ENCODE measurements at regions of chr7 and their contacts with region 1.

Region 1: DNA sequence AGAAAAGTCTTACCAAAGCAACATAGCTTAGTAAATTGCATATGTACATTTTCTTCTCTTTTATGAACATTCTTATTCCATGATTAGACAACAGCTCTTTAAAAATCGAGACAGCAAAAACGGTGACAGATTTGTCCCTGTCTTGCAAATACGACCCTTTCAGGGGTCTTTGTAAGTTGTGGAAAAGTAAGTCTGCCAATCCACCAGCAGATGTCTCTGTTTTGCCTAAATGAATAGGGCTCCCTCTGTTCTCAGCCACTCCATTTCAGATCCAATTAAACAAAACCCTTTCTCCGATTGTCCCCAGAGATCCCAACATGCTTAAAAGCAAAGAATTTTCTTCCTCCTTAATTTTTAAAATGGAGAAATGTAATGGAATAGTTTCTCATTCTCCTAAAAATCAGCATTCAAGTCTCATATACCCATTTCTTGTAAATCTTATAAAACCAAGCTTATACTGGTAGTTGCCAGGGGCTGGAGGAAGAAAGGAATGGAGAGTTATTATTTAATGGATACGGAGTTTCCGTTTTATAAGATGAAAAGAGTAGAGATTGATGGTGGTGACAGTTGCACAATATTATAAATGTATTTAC is 61.0 kb upstream of the NFE2L3 start:
- DNase-seq: peak; percentile 59
- ATAC-seq: peak; percentile 84
- H3K4me3 ChIP-seq: 0 out of 4 replicates have a peak overlapping the region, but pooled peaks of 1 of the 2 experiments have one; percentile 14
- H3K27ac ChIP-seq: no peak overlapping the region
- H3K4me1 ChIP-seq: peaks cover 0 to 3% of the 10 kb centered on the region in 2 experiments; a peak in 1 of 4 replicates
- H3K27me3 ChIP-seq: no peaks in the 10 kb centered on the region
- CTCF ChIP-seq: peak; percentile 63 to 82 (median 81)
- POLR2A ChIP-seq: no peak
- RAD21 ChIP-seq: peak; percentile 79

Region 2: GRCh38 chr7:26151953-26152781 is 61.1 kb after region 1 on chr7 and contains the start of gene NFE2L3:
- CTCF ChIA-PET with region 1: interaction called, 6 read pairs
- POLR2A ChIA-PET with region 1: no interaction called
- RAD21 ChIA-PET with region 1: interaction called in 1 of 2 experiments, 3 read pairs
- intact Hi-C with region 1: loop called (anchors 5 kb)
- DNase-seq: peak; percentile 64
- ATAC-seq: peak; percentile 86
- H3K4me3 ChIP-seq: peak within 1 kb of the TSS; percentile 49 to 62
- H3K27ac ChIP-seq: peak within 1 kb of the TSS; percentile 57; the same call in 1 of the 2 replicates
- H3K4me1 ChIP-seq: peaks cover 28 to 51% of the 10 kb centered on the region in 2 experiments
- H3K27me3 ChIP-seq: no peaks in the 10 kb centered on the region
- CTCF ChIP-seq: no peak
- POLR2A ChIP-seq: peak; percentile 31
- RAD21 ChIP-seq: no peak
- total RNA-seq, gene NFE2L3: 27.0 TPM

Region 3: GRCh38 chr7:26187380-26188205 is 96.6 kb after region 1 on chr7:
- CTCF ChIA-PET with region 1: interaction called, 16 read pairs
- POLR2A ChIA-PET with region 1: interaction called, 4 read pairs
- RAD21 ChIA-PET with region 1: no interaction called
- intact Hi-C with region 1: loop called (anchors 2 kb)
- DNase-seq: no peak
- ATAC-seq: peak; percentile 43
- H3K4me3 ChIP-seq: no peak overlapping the region
- H3K27ac ChIP-seq: no peak overlapping the region; the same call in none of the 2 replicates
- H3K4me1 ChIP-seq: no peaks in the 10 kb centered on the region
- H3K27me3 ChIP-seq: no peaks in the 10 kb centered on the region
- CTCF ChIP-seq: no peak
- POLR2A ChIP-seq: no peak
- RAD21 ChIP-seq: no peak

Region 4: GRCh38 chr7:26193432-26194207 is 102.6 kb after region 1 on chr7:
- CTCF ChIA-PET with region 1: interaction called, 13 read pairs
- POLR2A ChIA-PET with region 1: interaction called, 4 read pairs
- RAD21 ChIA-PET with region 1: no interaction called
- intact Hi-C with region 1: loop called (anchors 2 kb)
- DNase-seq: no peak
- ATAC-seq: no peak
- H3K4me3 ChIP-seq: no peak overlapping the region
- H3K27ac ChIP-seq: no peak overlapping the region
- H3K4me1 ChIP-seq: peaks cover 0 to 12% of the 10 kb centered on the region in 2 experiments; a peak in 2 of 4 replicates
- H3K27me3 ChIP-seq: no peaks in the 10 kb centered on the region
- CTCF ChIP-seq: no peak
- POLR2A ChIP-seq: no peak
- RAD21 ChIP-seq: no peak

Region 5: GRCh38 chr7:26200444-26201246 is 109.6 kb after region 1 on chr7 and contains the start of gene HNRNPA2B1:
- CTCF ChIA-PET with region 1: interaction called, 13 read pairs
- POLR2A ChIA-PET with region 1: interaction called, 3 read pairs
- RAD21 ChIA-PET with region 1: no interaction called
- intact Hi-C with region 1: no loop called
- DNase-seq: peak; percentile 95
- ATAC-seq: peak; percentile 78
- H3K4me3 ChIP-seq: peak within 1 kb of the TSS; percentile 68 to 93
- H3K27ac ChIP-seq: peak within 1 kb of the TSS; percentile 97
- H3K4me1 ChIP-seq: peaks cover 13 to 39% of the 10 kb centered on the region in 2 experiments
- H3K27me3 ChIP-seq: no peaks in the 10 kb centered on the region
- CTCF ChIP-seq: no peak
- POLR2A ChIP-seq: peak; percentile 99
- RAD21 ChIP-seq: no peak
- total RNA-seq, gene HNRNPA2B1: 870 TPM

Region 6: GRCh38 chr7:26284995-26285632 is 194.1 kb after region 1 on chr7:
- CTCF ChIA-PET with region 1: interaction called, 3 read pairs
- POLR2A ChIA-PET with region 1: no interaction called
- RAD21 ChIA-PET with region 1: interaction called in 1 of 2 experiments, 3 read pairs
- intact Hi-C with region 1: loop called (anchors 2 kb)
- DNase-seq: peak; percentile 61
- ATAC-seq: peak; percentile 100
- H3K4me3 ChIP-seq: no peak overlapping the region
- H3K27ac ChIP-seq: no peak overlapping the region
- H3K4me1 ChIP-seq: no peaks in the 10 kb centered on the region
- H3K27me3 ChIP-seq: no peaks in the 10 kb centered on the region
- CTCF ChIP-seq: peak; percentile 45 to 61 (median 53); a peak in 5 of 6 replicates
- POLR2A ChIP-seq: no peak
- RAD21 ChIP-seq: peak; percentile 76

Region 7: GRCh38 chr7:26686448-26686981 is 595.5 kb after region 1 on chr7:
- CTCF ChIA-PET with region 1: no interaction called
- POLR2A ChIA-PET with region 1: no interaction called
- RAD21 ChIA-PET with region 1: no interaction called
- intact Hi-C with region 1: no loop called
- DNase-seq: peak; percentile 21
- ATAC-seq: peak; percentile 78
- H3K4me3 ChIP-seq: no peak overlapping the region
- H3K27ac ChIP-seq: no peak overlapping the region
- H3K4me1 ChIP-seq: peaks cover 4 to 11% of the 10 kb centered on the region in 2 experiments; a peak in 3 of 4 replicates
- H3K27me3 ChIP-seq: no peaks in the 10 kb centered on the region
- CTCF ChIP-seq: peak; percentile 53 to 72 (median 66)
- POLR2A ChIP-seq: no peak
- RAD21 ChIP-seq: peak; percentile 71

Region 8: GRCh38 chr7:26709210-26709990 is 618.4 kb after region 1 on chr7:
- CTCF ChIA-PET with region 1: no interaction called
- POLR2A ChIA-PET with region 1: no interaction called
- RAD21 ChIA-PET with region 1: no interaction called
- intact Hi-C with region 1: no loop called
- DNase-seq: no peak
- ATAC-seq: no peak
- H3K4me3 ChIP-seq: no peak overlapping the region
- H3K27ac ChIP-seq: no peak overlapping the region
- H3K4me1 ChIP-seq: no peaks in the 10 kb centered on the region
- H3K27me3 ChIP-seq: no peaks in the 10 kb centered on the region
- CTCF ChIP-seq: no peak
- POLR2A ChIP-seq: no peak
- RAD21 ChIP-seq: no peak